ENCODE measurements at regions of chr1 and their contacts with region 1.

Region 1: DNA sequence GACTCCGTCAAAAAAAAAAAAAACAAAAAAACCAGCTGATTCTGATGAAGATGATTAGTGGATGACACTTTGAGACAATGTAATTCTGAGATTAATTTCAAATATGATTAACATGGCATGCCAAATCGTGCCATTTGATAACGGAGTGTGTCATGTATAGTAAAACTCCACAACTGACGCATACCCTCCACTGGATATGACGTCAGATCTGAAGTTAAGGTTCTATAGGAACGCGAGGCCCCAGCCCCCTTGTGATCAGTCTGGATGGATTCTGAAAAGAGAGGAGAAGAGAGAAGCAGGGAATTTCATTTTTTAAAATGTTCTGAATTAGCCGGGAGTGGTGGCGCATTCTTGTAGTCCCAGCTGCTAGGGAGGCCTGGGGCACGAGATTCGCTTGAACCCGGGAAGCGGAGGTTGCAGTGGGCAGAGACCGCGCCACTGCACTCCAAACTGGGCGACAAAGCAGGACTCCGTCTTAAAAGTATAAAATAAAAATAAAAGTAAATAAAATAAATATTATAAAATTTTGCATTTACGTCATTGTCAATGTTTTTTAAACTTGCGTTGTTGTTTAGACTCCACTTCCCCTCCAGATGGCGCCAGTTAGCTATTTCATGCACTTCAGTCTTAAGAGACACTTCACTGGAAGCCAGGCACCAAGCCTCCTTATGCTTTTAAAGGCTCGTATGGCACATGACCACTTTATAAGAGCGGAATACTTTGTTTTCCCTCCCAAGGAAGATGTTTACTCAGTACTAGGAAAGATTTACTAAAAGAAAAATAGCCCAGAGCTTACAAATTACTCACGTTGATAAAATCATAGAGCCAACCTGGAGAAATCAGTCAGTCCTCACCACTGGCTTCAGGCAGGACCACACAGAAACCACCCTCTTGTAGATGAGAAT is 65.5 kb downstream of the UBE2U start:
- ATAC-seq: peak; percentile 68 to 91 (median 86)
- H3K4me3 ChIP-seq: no peak overlapping the region
- H3K27ac ChIP-seq: no peak overlapping the region
- H3K4me1 ChIP-seq: no peaks in the 10 kb centered on the region

Region 2: DNA sequence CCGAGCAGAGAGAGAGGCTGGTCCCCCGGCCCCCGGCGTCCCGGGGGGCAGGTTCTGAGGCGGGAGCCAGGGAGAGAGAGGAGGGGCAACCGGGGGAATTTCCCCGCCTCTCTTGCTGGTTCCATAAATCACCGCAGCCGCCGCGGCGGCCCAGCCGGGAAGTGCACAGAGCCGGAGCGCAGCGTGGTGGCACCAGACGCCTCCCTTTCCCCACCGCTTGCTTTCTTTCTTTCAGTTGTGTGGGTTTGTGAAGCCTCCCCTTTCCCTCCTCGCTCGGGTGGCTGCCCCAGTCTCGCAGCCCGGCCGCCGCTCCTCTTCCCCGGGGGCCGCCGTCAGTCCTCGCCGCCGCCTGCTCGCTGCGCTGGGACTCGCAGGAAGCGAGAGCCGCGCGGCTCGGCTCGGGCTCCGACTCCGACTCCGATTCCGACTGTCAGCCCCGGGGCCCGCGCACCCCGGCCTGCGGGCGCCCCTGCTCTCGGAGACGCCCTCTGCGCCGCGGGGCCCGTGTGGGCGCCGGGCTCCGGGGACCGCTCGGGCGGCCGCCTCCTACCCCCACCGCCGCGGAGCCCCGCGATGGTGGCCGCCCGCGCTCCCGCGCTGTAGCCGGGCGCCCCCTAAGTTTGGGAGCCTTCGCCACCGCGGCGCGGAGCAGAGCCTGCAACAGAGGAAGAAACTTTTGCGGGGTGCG is 201.2 kb after region 1 on chr1 and contains the start of gene CACHD1:
- in situ Hi-C with region 1: loop called in 1 of 9 experiments (anchors 25 kb)
- ATAC-seq: peak; percentile 75 to 83 (median 81)
- H3K4me3 ChIP-seq: peak within 1 kb of the TSS; percentile 62 to 76 (median 71)
- H3K27ac ChIP-seq: peak within 1 kb of the TSS; percentile 65 to 87
- H3K4me1 ChIP-seq: peaks cover 21 to 23% of the 10 kb centered on the region in 2 donors
- total RNA-seq, gene CACHD1: 18.6 to 54.2 (median 31.6) TPM

Region 3: GRCh38 chr1:64624808-64625207 is 355.9 kb after region 1 on chr1:
- in situ Hi-C with region 1: loop called in 1 of 9 experiments (anchors 25 kb)
- ATAC-seq: peak in 4 of 8 experiments; percentile 3 to 26 (median 16)
- H3K4me3 ChIP-seq: no peak overlapping the region
- H3K27ac ChIP-seq: no peak overlapping the region
- H3K4me1 ChIP-seq: peaks cover 24 to 28% of the 10 kb centered on the region in 2 donors

Region 4: DNA sequence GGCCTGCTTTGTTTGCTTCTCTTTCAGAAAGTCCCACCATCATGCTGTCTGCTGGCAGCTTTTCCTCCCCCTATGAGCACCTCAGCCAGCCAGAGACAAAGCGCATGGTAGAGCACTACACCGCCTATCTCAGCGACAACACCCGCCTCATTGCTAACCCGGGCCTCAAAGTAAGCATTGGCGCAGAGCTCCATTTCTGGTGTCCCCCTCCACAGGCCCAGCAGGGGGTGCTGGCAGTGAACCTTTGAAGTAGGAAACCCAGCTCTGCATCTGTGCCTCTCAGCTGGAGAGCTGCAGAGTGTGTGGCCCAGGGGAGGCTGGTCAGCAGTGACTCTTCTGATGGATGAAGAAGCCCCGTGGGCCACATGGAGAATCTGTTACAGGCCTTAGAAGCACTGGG is 394.8 kb after region 1 on chr1:
- in situ Hi-C with region 1: loop called in 1 of 9 experiments (anchors 25 kb)
- ATAC-seq: peak in 7 of 8 experiments; percentile 23 to 94 (median 93)
- H3K4me3 ChIP-seq: no peak overlapping the region
- H3K27ac ChIP-seq: peak overlapping the region; percentile 85 to 86
- H3K4me1 ChIP-seq: peaks cover 15 to 18% of the 10 kb centered on the region in 2 donors

Region 5: DNA sequence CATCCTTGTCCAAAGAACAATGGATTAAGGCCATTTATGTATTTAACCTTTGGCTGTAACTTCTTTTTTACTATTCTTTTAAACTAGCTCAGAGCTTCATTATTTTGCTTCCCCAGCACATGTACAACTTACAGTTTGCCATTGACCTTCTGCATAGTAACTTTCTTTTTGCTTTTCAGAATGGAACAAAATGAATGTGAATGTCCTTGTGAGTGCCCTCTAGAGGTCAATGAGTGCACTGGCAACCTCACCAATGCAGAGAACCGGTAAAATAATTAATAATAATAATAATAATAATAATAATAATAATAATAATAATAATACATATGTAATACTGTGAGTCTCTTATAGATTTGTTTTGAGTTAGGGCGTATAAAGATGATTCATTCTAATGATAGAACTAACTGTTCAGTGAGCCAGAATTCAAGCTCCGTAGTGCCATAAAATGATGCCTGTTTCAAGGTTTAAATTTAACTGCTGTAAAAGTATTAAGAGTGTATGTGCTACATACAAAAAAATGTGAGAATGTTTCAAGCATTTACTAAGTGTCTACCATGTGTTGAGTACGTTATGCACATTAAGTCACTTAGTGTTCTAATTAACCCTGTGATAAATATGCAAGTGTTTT is 406.9 kb after region 1 on chr1:
- in situ Hi-C with region 1: loop called in 3 of 9 experiments (anchors 10 to 25 kb)
- ATAC-seq: no peak
- H3K4me3 ChIP-seq: no peak overlapping the region
- H3K27ac ChIP-seq: no peak overlapping the region
- H3K4me1 ChIP-seq: no peaks in the 10 kb centered on the region

Region 6: GRCh38 chr1:64686828-64687724 is 418.2 kb after region 1 on chr1:
- in situ Hi-C with region 1: loop called in 1 of 9 experiments (anchors 25 kb)
- ATAC-seq: peak in 7 of 8 experiments; percentile 36 to 67 (median 48)
- H3K4me3 ChIP-seq: no peak overlapping the region
- H3K27ac ChIP-seq: no peak overlapping the region
- H3K4me1 ChIP-seq: peaks cover 16 to 23% of the 10 kb centered on the region in 2 donors

Region 7: GRCh38 chr1:64823691-64824476 is 555.0 kb after region 1 on chr1:
- in situ Hi-C with region 1: loop called in 6 of 9 experiments (anchors 10 to 25 kb)
- ATAC-seq: peak; percentile 67 to 96 (median 94)
- H3K4me3 ChIP-seq: no peak overlapping the region
- H3K27ac ChIP-seq: peak overlapping the region in 1 of 2 donors; percentile 32
- H3K4me1 ChIP-seq: peaks cover 4% of the 10 kb centered on the region in 2 donors

Measured in motor neuron (in vitro differentiated cells).